ENCODE measurements at regions of chr5 and their contacts with region 1.

Region 1: GRCh38 chr5:95861221-95861857 is 38.8 kb upstream of the GLRX start:
- DNase-seq: peak in 3 of 4 donors; percentile 65 to 88 (median 87)
- ATAC-seq: peak; percentile 34
- H3K4me3 ChIP-seq: no peak overlapping the region
- H3K27ac ChIP-seq: peak overlapping the region; percentile 68 to 88
- H3K4me1 ChIP-seq: peaks cover 18 to 83% of the 10 kb centered on the region in 2 donors
- H3K27me3 ChIP-seq: no peaks in the 10 kb centered on the region
- CTCF ChIP-seq: no peak

Region 2: GRCh38 chr5:95961617-95962474 is 100.5 kb after region 1 on chr5 and contains the start of gene ELL2:
- intact Hi-C with region 1: loop called in 1 of 2 experiments (anchors 5 kb)
- DNase-seq: peak; percentile 84 to 99 (median 98)
- ATAC-seq: peak; percentile 89
- H3K4me3 ChIP-seq: peak within 1 kb of the TSS; percentile 79 to 89
- H3K27ac ChIP-seq: peak within 1 kb of the TSS; percentile 99 to 100
- H3K4me1 ChIP-seq: peaks cover 18 to 35% of the 10 kb centered on the region in 2 donors
- H3K27me3 ChIP-seq: no peaks in the 10 kb centered on the region
- CTCF ChIP-seq: no peak
- polyA plus RNA-seq, gene ELL2: 15.3 to 26.3 (median 22.5) TPM

Region 3: DNA sequence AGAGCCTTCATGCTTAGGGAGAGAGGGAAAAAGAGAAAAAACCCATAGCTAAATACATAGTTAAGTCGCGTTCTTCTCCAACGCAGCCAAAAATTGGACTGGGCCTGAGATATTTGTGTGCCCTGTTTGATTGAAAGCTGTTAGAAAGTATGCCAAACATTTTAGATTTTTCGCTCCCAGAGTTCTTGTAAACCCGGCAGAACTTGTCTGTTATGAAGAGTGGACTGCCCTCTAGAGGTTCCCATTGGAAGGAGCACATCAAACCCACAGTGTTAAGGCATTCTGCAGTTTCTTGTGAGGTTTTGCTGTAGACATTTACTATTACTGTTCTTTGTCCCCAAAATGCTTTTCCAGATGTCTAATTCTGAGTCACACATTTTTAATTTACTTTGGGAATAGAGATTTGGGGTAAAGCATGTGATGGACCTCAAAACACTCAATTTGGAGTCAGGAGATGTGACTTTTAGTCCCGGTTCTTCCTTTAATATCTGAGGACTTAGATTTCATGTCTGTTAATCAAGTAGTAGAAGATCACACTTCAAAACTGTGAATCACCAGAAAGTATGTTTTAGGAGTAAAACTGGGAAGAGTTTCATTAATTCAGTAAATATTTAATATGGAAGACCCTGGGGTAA is 475.1 kb after region 1 on chr5:
- intact Hi-C with region 1: loop called in 1 of 2 experiments (anchors 5 kb)
- DNase-seq: peak in 3 of 4 donors; percentile 46 to 85 (median 78)
- ATAC-seq: peak; percentile 98
- H3K4me3 ChIP-seq: no peak overlapping the region
- H3K27ac ChIP-seq: peak overlapping the region; percentile 10 to 43
- H3K4me1 ChIP-seq: peaks cover 4 to 38% of the 10 kb centered on the region in 2 donors
- H3K27me3 ChIP-seq: no peaks in the 10 kb centered on the region
- CTCF ChIP-seq: peak; percentile 77 to 85

Measured in left lung (tissue), 14 donors.